Sigmoid colon (tissue), 7 donors: ENCODE measurements at regions of chr10 and their contacts with region 1.

Region 1: DNA sequence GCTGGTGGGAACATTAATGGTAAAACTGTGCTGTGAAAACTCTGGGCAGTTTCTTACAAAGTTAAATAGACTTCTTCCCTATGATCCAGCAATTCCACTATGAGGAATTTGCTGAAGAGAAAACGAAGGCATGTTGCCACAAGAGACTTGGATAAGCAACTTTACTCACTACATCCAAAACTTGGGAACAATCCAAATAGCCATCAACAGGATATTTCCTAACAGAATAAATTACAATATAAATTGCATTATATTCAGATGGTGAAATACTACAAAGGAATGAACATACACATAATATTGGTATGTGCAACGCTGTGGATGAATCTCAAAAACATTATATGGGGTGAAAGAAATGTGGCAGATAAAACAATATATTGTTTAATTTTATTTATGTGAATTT is 21.4 kb upstream of the MKI67 start:
- DNase-seq: no peak
- H3K4me3 ChIP-seq: no peak overlapping the region
- H3K27ac ChIP-seq: no peak overlapping the region
- H3K4me1 ChIP-seq: peaks cover 0 to 10% (median 7%) of the 10 kb centered on the region in 4 donors
- H3K27me3 ChIP-seq: peaks cover 5 to 20% (median 20%) of the 10 kb centered on the region in 3 donors
- CTCF ChIP-seq: no peak
- EP300 ChIP-seq: no peak
- POLR2A ChIP-seq: no peak

Region 2: GRCh38 chr10:128078136-128078969 is 69.3 kb before region 1 on chr10:
- intact Hi-C with region 1: loop called (anchors 2 kb)
- DNase-seq: peak; percentile 52
- H3K4me3 ChIP-seq: no peak overlapping the region
- H3K27ac ChIP-seq: no peak overlapping the region
- H3K4me1 ChIP-seq: no peaks in the 10 kb centered on the region
- H3K27me3 ChIP-seq: no peaks in the 10 kb centered on the region
- CTCF ChIP-seq: peak in 3 of 4 experiments; percentile 30 to 53 (median 45)
- EP300 ChIP-seq: no peak
- POLR2A ChIP-seq: no peak

Region 3: GRCh38 chr10:128125944-128126764 is 21.5 kb before region 1 on chr10 and contains the start of gene MKI67:
- intact Hi-C with region 1: no loop called
- DNase-seq: peak; percentile 81
- H3K4me3 ChIP-seq: peak within 1 kb of the TSS; percentile 12 to 63 (median 54)
- H3K27ac ChIP-seq: no peak within 1 kb of the TSS
- H3K4me1 ChIP-seq: peaks cover 0 to 22% (median 17%) of the 10 kb centered on the region in 4 donors
- H3K27me3 ChIP-seq: peaks cover 3 to 47% (median 36%) of the 10 kb centered on the region in 3 donors
- CTCF ChIP-seq: no peak
- EP300 ChIP-seq: no peak
- POLR2A ChIP-seq: no peak
- total RNA-seq, gene MKI67: 0.49 to 2.0 (median 1.2) TPM